Common myeloid progenitor, CD34-positive (primary cell): ENCODE measurements at regions of chr11 and their contacts with region 1.

Region 1: DNA sequence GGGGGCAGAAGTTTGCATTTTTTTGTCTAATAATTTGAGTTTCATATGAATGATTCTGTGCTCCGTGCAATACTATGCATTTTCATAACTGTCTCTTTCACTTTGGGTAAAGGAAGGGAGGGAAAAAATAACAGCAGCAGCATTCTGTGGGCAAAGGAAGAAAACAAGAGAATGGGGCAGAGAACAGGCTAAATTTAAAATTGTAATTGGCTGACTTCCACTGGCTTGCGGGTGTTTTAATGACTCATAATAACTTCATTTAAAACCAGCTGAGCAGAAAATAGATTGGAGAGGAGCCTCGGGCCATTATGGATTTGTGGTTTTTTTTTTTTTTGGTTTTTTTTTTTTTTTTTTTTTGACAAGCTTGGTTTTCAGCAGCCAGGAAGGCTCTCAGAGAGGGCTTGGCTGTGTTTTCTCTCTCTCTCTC is 107.4 kb downstream of the ZBTB16 start:
- DNase-seq: peak; percentile 72 to 89 (median 88)
- H3K4me3 ChIP-seq: peak overlapping the region in 3 of 7 experiments; percentile 28 to 64 (median 58)
- H3K27ac ChIP-seq: no peak overlapping the region
- H3K4me1 ChIP-seq: peaks cover 5 to 82% (median 71%) of the 10 kb centered on the region in 4 experiments
- H3K27me3 ChIP-seq: no peaks in the 10 kb centered on the region

Region 2: DNA sequence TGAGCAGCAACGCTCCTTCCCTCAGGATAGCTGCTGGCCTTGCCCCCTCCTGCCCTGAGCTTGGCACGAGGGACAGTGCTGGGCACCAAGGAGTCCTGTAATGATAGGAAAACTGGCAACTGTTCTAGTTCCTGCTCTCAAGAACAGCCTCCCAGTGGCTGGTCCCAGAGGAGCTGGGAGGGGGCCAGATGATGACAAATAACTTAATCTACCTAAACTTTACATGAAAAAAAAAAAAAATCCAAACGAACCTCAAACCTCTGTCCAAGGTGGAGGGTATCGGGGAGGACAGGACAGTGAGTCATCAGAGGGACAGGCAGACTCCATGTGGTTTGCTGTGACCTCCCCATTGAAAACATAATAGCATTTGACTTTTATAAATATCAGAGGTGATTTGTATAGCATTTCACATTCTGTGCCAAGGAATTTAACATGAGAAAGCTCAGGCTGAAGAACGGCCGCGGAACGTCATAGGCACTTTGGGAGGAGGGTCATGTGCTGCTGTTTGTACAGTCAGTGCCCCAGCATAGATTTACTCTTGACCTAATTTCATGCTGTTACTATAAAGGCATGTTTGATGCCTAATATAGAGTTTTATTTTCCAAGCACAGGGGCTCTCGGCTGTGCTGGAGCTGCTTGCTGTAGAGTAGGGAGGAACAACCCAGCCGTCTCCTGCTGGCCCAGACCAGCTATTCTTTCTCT is 31.0 kb after region 1 on chr11:
- CTCF ChIA-PET with region 1: interaction called, 39 read pairs
- POLR2A ChIA-PET with region 1: no interaction called
- DNase-seq: no peak
- H3K4me3 ChIP-seq: no peak overlapping the region
- H3K27ac ChIP-seq: no peak overlapping the region
- H3K4me1 ChIP-seq: peaks cover 0 to 12% (median 5%) of the 10 kb centered on the region in 4 experiments
- H3K27me3 ChIP-seq: no peaks in the 10 kb centered on the region